Endothelial cell of umbilical vein (primary cell): ENCODE measurements at regions of chr5 and their contacts with region 1.

Region 1: GRCh38 chr5:35926389-35927051 is 11.9 kb downstream of the CAPSL start:
- DNase-seq: peak; percentile 54
- H3K4me3 ChIP-seq: no peak overlapping the region
- H3K27ac ChIP-seq: no peak overlapping the region
- H3K4me1 ChIP-seq: no peaks in the 10 kb centered on the region
- H3K27me3 ChIP-seq: peaks cover 2 to 3% of the 10 kb centered on the region in 2 experiments
- CTCF ChIP-seq: peak; percentile 69 to 70
- POLR2A ChIP-seq: no peak

Region 2: GRCh38 chr5:35089334-35090314 is 836.9 kb before region 1 on chr5:
- CTCF ChIA-PET with region 1: interaction called, 63 read pairs
- POLR2A ChIA-PET with region 1: no interaction called
- dilution Hi-C with region 1: no loop called
- intact Hi-C with region 1: loop called (anchors 1 kb)
- DNase-seq: peak; percentile 38
- H3K4me3 ChIP-seq: no peak overlapping the region
- H3K27ac ChIP-seq: no peak overlapping the region
- H3K4me1 ChIP-seq: no peaks in the 10 kb centered on the region
- H3K27me3 ChIP-seq: no peaks in the 10 kb centered on the region
- CTCF ChIP-seq: peak; percentile 44 to 59
- POLR2A ChIP-seq: no peak

Region 3: DNA sequence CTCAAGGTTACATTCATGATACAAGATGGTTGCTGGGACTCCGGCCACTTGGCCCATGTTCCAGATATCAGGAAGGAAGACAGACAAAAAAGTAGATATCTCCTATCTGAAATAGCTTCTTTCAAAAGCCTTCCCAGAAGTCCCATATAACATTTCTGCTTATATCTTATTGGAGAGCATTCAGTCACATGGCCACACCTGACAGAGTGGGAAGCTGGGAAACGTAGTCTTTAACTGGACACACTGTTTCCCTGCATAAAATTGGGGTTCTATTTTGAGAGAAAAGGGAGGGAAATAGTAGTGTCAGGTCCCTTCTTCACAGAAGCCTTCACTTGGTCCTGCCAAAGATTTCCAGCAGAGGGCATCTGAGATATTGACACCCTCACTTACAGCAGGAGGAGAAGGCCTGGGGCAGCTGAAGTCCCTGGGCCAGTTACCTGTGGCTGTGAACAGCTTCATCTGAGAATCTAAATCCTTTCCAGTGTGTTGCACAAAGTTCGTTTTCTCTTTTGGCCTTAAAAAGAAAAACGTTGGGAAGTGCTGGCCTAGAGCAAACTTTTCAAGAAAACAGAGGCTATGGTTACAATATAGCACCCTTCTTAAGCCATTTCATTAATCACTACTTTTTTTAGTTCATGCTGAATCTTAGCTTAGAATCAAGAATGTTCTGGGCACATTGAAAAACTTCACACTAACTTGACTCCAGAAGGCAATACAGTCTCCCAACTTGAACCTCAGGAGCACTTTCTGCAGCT is 275.3 kb before region 1 on chr5:
- CTCF ChIA-PET with region 1: interaction called, 339 read pairs
- POLR2A ChIA-PET with region 1: no interaction called
- dilution Hi-C with region 1: no loop called
- intact Hi-C with region 1: loop called (anchors 1 kb)
- DNase-seq: peak; percentile 57
- H3K4me3 ChIP-seq: no peak overlapping the region
- H3K27ac ChIP-seq: no peak overlapping the region
- H3K4me1 ChIP-seq: no peaks in the 10 kb centered on the region
- H3K27me3 ChIP-seq: no peaks in the 10 kb centered on the region
- CTCF ChIP-seq: peak; percentile 35 to 68
- POLR2A ChIP-seq: no peak

Region 4: DNA sequence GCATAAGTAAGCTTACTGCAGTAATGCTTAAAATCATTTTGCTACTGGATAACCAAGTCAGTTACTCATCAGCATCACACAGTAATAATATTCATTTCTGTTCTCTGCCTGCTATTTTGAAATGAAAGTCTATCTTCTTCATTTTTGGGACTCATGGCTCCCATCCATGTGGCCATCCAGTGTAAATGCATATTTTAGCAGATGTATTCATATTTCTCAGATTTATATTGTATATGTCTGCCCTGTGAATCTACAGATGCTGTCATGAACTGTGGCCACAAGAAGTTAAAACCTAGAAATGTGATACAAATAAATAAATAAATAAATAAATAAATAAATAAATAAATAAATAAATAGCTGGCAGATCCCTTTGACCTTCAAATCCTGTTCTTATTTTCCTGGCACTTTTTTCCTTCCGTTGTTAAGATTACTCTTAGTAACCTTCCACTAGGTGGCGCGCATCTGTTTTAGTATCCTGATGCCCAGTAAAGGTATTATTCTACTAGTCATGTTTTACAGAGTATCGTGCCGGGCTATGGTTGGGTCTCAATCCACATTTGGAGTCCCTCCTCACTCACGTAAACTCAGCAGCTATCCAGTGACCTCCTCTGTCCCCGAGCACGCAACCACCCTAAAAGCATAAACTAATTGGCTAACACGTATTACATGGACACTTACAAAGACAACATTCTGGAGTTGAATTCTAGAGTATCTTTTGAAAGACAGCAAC is 149.0 kb before region 1 on chr5:
- CTCF ChIA-PET with region 1: interaction called, 224 read pairs
- POLR2A ChIA-PET with region 1: no interaction called
- dilution Hi-C with region 1: no loop called
- intact Hi-C with region 1: loop called (anchors 1 kb)
- DNase-seq: peak; percentile 70
- H3K4me3 ChIP-seq: no peak overlapping the region
- H3K27ac ChIP-seq: no peak overlapping the region
- H3K4me1 ChIP-seq: peaks cover 8% of the 10 kb centered on the region
- H3K27me3 ChIP-seq: no peaks in the 10 kb centered on the region
- CTCF ChIP-seq: peak; percentile 43 to 53
- POLR2A ChIP-seq: no peak

Region 5: GRCh38 chr5:35822511-35822910 is 104.0 kb before region 1 on chr5:
- CTCF ChIA-PET with region 1: interaction called, 10 read pairs
- POLR2A ChIA-PET with region 1: no interaction called
- dilution Hi-C with region 1: no loop called
- intact Hi-C with region 1: no loop called
- DNase-seq: no peak
- H3K4me3 ChIP-seq: no peak overlapping the region
- H3K27ac ChIP-seq: no peak overlapping the region
- H3K4me1 ChIP-seq: no peaks in the 10 kb centered on the region
- H3K27me3 ChIP-seq: peaks cover 0 to 5% of the 10 kb centered on the region in 2 experiments
- CTCF ChIP-seq: no peak
- POLR2A ChIP-seq: no peak

Region 6: DNA sequence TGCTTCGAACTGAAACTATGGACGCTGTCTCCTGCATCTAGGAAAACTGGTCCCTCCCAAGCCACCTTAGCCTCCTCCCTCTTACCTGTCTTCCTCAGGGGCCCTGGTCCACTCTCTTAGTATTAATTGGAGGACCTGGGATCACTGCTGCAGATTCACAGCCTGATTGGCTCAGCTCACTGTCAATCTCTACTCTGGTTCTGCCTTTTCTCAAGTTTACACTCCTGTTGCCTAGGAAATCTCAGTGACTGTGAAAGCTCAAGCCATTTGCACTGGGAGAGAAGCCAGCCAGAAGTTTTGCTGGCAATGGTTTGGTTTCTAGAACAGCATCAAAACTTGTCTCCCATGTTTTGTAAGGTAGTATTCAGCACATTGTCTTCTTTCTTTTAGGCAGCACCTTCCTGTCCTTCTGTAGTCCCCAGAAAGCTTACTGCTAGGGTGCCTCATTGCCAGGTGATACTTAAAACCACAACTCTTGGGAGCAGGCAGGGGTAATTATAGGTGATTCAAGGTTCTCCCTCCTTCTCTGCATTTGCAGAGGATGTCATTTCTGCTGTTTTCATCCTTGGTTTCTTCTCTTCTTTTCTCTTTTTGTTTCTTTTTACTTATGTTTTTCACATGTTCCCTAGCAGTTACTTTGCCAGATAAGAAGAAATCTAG is 12.2 kb after region 1 on chr5 and contains the start of gene CAPSL:
- CTCF ChIA-PET with region 1: interaction called, 21 read pairs
- POLR2A ChIA-PET with region 1: no interaction called
- dilution Hi-C with region 1: no loop called
- intact Hi-C with region 1: no loop called
- DNase-seq: peak; percentile 9
- H3K4me3 ChIP-seq: no peak within 1 kb of the TSS
- H3K27ac ChIP-seq: no peak within 1 kb of the TSS
- H3K4me1 ChIP-seq: no peaks in the 10 kb centered on the region
- H3K27me3 ChIP-seq: no peaks in the 10 kb centered on the region
- CTCF ChIP-seq: no peak
- POLR2A ChIP-seq: no peak
- total RNA-seq, gene CAPSL: not detected in 2 replicates

Region 7: GRCh38 chr5:36052538-36052937 is 126.0 kb after region 1 on chr5:
- CTCF ChIA-PET with region 1: no interaction called
- POLR2A ChIA-PET with region 1: no interaction called
- dilution Hi-C with region 1: no loop called
- intact Hi-C with region 1: no loop called
- DNase-seq: no peak
- H3K4me3 ChIP-seq: no peak overlapping the region
- H3K27ac ChIP-seq: no peak overlapping the region
- H3K4me1 ChIP-seq: no peaks in the 10 kb centered on the region
- H3K27me3 ChIP-seq: no peaks in the 10 kb centered on the region
- CTCF ChIP-seq: no peak
- POLR2A ChIP-seq: no peak